Mucosa of descending colon (tissue), 3 donors: ENCODE measurements at regions of chr4 and their contacts with region 1.

Region 1: GRCh38 chr4:157992038-157992705 is 180.7 kb downstream of the GASK1B start:
- DNase-seq: peak in 1 of 3 donors; percentile 86
- ATAC-seq: peak; percentile 72
- H3K4me3 ChIP-seq: no peak overlapping the region
- H3K4me1 ChIP-seq: no peaks in the 10 kb centered on the region
- CTCF ChIP-seq: no peak

Region 2: GRCh38 chr4:157885811-157886210 is 106.4 kb before region 1 on chr4:
- intact Hi-C with region 1: no loop called
- DNase-seq: no peak
- ATAC-seq: no peak
- H3K4me3 ChIP-seq: no peak overlapping the region
- H3K4me1 ChIP-seq: no peaks in the 10 kb centered on the region
- CTCF ChIP-seq: no peak

Region 3: DNA sequence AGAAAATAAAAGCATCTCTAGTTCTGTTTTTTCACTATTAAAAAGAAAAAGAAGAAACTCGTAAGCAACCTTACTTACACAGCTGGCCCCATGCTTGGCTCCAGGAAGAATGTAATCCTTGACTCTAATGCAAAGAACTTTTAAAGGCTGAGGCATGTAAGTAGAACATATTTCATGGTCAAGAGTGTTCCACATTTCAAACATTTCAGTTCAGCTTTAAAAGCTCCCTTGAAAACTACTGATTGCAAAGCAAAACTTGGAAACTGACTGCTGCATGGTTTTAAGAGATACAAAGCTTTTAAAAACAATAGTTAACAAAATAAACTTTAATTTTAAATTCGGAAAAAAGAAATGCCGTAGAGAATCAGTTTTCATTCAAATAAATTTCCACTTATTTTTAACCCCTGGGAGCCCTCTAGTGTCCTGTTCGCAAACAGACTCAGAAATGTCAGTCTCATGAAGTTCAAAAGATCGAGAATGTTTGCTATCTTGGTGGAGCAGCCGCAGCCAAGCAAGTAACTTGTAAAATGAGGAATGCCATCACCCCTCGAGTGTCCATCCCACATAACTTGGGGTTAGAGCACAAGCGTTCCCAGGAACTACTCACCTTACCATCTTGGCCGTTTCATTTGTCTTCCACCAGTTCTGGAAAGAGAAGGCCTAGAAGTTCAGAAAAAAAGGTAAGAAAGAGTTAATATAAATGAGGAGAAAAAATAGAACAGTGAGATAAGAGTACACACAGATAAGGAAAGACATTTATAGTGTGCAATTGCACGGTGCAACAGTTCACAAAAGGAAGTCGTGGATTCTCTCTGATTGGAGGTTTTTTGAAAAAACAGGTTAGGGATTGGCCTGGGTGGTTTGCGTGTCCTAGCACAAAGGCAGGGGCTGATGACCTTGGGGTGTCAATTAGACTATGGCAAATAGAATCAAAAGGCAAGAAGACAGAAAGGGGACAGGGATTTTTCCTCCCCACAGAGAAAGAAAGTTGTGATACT is 180.4 kb after region 1 on chr4 and contains the start of gene GASK1B:
- intact Hi-C with region 1: loop called (anchors 2 to 5 kb)
- DNase-seq: peak in 2 of 3 donors; percentile 34 to 78
- ATAC-seq: peak; percentile 83
- H3K4me3 ChIP-seq: no peak within 1 kb of the TSS
- H3K4me1 ChIP-seq: peaks cover 13% of the 10 kb centered on the region
- CTCF ChIP-seq: peak; percentile 39
- total RNA-seq, gene GASK1B: 10.3 to 21.6 (median 20.2) TPM

Region 4: GRCh38 chr4:158253350-158253980 is 261.3 kb after region 1 on chr4:
- intact Hi-C with region 1: loop called in 1 of 2 experiments (anchors 10 kb)
- DNase-seq: peak in 1 of 3 donors; percentile 80
- ATAC-seq: peak; percentile 67
- H3K4me3 ChIP-seq: no peak overlapping the region
- H3K4me1 ChIP-seq: no peaks in the 10 kb centered on the region
- CTCF ChIP-seq: no peak